Calu3 (cell line): ENCODE measurements at regions of chr22 and their contacts with region 1.

Region 1: DNA sequence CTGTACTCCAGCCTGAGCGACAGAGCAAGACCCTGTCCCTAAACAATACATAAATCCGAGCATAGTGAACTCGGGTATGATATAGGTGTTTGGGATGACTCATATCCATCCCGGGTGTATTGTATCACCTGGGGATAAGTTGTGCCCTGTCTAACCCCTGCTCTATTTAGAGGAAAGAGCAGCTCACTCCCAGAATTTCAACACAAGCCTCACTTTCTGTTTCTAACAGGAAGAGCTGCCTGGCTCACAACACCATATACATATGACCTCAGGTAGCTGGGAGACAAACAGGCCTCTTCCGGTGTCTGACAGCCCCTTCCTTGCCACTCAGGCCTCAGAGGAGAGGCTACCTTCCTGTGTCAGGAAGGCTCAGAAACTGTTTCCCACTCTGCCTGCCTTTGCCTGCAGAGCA is 9.9 kb upstream of the MICALL1 start:
- DNase-seq: peak; percentile 54
- H3K4me3 Mint-ChIP-seq: no peak overlapping the region
- H3K27ac Mint-ChIP-seq: peak overlapping the region; percentile 71
- H3K4me1 Mint-ChIP-seq: peaks cover 65% of the 10 kb centered on the region
- H3K27me3 Mint-ChIP-seq: no peaks in the 10 kb centered on the region
- CTCF ChIP-seq: no peak

Region 2: GRCh38 chr22:37920126-37920525 is 23.9 kb after region 1 on chr22:
- CTCF ChIA-PET with region 1: interaction called, 13 read pairs
- intact Hi-C with region 1: no loop called
- DNase-seq: no peak
- H3K4me3 Mint-ChIP-seq: no peak overlapping the region
- H3K27ac Mint-ChIP-seq: no peak overlapping the region
- H3K4me1 Mint-ChIP-seq: no peaks in the 10 kb centered on the region
- H3K27me3 Mint-ChIP-seq: no peaks in the 10 kb centered on the region
- CTCF ChIP-seq: no peak

Region 3: GRCh38 chr22:37933711-37934376 is 37.7 kb after region 1 on chr22:
- CTCF ChIA-PET with region 1: no interaction called
- intact Hi-C with region 1: loop called (anchors 5 kb)
- DNase-seq: peak; percentile 97
- H3K4me3 Mint-ChIP-seq: no peak overlapping the region
- H3K27ac Mint-ChIP-seq: peak overlapping the region; percentile 63
- H3K4me1 Mint-ChIP-seq: peaks cover 17% of the 10 kb centered on the region
- H3K27me3 Mint-ChIP-seq: no peaks in the 10 kb centered on the region
- CTCF ChIP-seq: peak; percentile 94